GM12878 (cell line): ENCODE measurements at regions of chr1 and their contacts with region 1.

Region 1: GRCh38 chr1:235415008-235415904 is 48.0 kb downstream of the TBCE start:
- DNase-seq: peak; percentile 15
- ATAC-seq: peak; percentile 97
- H3K4me3 ChIP-seq: no peak overlapping the region
- H3K27ac ChIP-seq: no peak overlapping the region
- H3K4me1 ChIP-seq: no peaks in the 10 kb centered on the region
- H3K27me3 ChIP-seq: no peaks in the 10 kb centered on the region
- CTCF ChIP-seq: peak; percentile 78 to 81 (median 80)
- EP300 ChIP-seq: no peak
- POLR2A ChIP-seq: no peak
- RAD21 ChIP-seq: peak; percentile 73

Region 2: DNA sequence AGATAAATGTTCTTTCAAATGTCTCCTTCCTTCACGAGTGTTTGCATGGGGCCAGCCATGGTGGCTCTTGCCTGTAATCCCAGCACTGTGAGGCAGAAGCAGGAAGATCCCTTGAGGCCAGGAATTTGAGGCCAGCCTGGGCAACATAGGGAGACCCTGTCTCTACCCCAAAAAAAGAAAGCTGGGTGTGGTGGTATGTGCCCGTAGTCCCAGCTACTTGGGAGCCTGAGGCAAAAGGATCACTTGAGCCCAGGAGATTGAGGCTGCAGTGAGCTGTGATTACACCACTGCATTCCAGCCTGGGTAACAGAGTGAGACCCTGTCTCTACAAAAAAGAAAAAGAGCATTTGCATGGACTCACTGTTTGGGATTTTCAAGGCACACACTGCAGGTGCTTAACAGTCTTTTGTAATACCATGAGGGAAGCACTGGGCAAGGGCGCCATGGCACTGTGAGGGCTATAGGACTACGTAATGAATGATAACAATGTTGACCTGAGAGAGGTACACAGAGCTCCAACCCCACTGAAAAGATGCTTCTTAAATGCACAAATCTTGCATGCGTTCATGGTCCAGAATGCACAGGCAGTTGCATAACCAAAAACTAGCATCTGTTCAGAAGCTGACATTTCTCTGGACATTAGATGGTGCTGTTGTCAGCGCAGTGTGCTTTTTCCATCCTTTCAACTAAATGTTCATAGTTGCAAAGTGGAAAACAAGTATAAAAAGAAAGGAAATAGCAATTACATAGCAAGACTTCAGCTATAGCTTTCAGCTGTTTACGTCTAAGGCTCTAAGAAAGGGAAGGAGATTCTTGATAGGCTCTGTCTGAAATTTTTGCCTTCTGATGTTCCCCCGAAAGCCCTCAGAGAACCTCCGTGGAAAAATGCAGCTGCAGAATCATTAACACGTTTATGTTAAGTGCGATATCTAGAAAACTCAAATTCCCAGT is 928.5 kb before region 1 on chr1:
- CTCF ChIA-PET with region 1: interaction called, 29 read pairs
- POLR2A ChIA-PET with region 1: no interaction called
- RAD21 ChIA-PET with region 1: interaction called, 4 read pairs
- SMC1A ChIA-PET with region 1: interaction called, 7 read pairs
- in situ Hi-C with region 1: loop called (anchors 5 kb)
- intact Hi-C with region 1: loop called (anchors 5 kb)
- DNase-seq: no peak
- ATAC-seq: peak; percentile 63
- H3K4me3 ChIP-seq: no peak overlapping the region
- H3K27ac ChIP-seq: no peak overlapping the region
- H3K4me1 ChIP-seq: peaks cover 34% of the 10 kb centered on the region
- H3K27me3 ChIP-seq: no peaks in the 10 kb centered on the region
- CTCF ChIP-seq: peak; percentile 59 to 73 (median 72); a peak in 5 of 6 replicates
- EP300 ChIP-seq: no peak
- POLR2A ChIP-seq: no peak
- RAD21 ChIP-seq: peak; percentile 92

Region 3: DNA sequence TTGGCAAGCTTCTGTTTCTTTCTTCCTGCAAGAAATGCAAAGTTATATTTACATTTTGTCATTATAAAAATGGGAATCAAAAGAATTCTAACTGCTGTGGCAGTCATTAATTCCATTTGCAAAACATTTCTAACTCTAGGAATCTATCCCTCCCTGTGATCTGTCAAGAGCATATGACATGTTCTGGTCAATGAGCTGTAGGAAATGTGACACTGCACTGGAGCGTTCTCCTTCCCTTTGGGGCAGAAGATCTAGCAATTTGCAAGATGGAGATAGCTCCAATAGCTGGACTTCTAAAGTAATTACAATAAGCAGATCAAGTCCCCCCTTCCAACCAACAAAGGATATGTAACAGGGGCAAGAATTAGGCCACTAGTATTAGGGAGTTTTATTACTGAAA is 292.9 kb before region 1 on chr1:
- CTCF ChIA-PET with region 1: interaction called, 33 read pairs
- POLR2A ChIA-PET with region 1: no interaction called
- RAD21 ChIA-PET with region 1: interaction called, 10 read pairs
- SMC1A ChIA-PET with region 1: interaction called, 6 read pairs
- in situ Hi-C with region 1: no loop called
- intact Hi-C with region 1: no loop called
- DNase-seq: no peak
- ATAC-seq: peak; percentile 41
- H3K4me3 ChIP-seq: peak overlapping the region; percentile 3; the same call in 1 of the 2 replicates
- H3K27ac ChIP-seq: no peak overlapping the region
- H3K4me1 ChIP-seq: no peaks in the 10 kb centered on the region
- H3K27me3 ChIP-seq: no peaks in the 10 kb centered on the region
- CTCF ChIP-seq: no peak
- EP300 ChIP-seq: no peak
- POLR2A ChIP-seq: no peak
- RAD21 ChIP-seq: no peak

Region 4: DNA sequence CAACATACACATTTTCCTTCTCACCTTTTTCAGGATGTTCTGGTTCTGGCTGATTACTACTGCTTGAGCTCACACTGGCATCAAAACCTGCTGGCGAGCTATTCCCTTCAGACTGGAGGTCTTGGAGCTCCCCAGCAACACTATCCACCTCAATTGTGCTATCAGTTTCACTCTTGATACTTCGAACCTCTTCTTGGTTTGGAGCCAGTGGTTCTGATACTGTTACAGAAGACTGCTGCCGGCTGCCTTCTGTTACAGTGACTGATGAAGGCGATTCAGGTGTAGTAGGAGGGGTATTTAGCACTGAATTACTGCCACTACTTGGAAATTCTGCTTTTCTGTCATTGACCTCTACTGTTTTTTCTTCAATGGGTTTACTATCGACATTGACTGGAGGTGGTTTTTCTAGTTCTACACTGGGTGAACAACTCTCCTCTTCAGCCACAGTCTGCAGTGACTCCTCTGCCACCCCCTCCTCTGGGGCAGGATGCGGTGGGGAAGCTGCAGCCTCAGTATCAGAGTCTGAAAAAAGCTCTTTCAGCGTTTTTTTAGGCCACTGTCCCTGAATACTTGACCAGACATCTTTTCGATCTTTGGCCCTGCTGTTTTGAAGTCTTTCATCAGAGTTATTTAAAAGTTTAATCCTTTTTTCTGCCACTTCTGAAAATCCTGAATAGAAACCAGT is 233.6 kb before region 1 on chr1:
- CTCF ChIA-PET with region 1: interaction called, 10 read pairs
- POLR2A ChIA-PET with region 1: no interaction called
- RAD21 ChIA-PET with region 1: no interaction called
- SMC1A ChIA-PET with region 1: interaction called, 3 read pairs
- in situ Hi-C with region 1: no loop called
- intact Hi-C with region 1: loop called (anchors 5 kb)
- DNase-seq: no peak
- ATAC-seq: no peak; the same call in 2 of the 3 replicates
- H3K4me3 ChIP-seq: no peak overlapping the region
- H3K27ac ChIP-seq: no peak overlapping the region
- H3K4me1 ChIP-seq: no peaks in the 10 kb centered on the region
- H3K27me3 ChIP-seq: no peaks in the 10 kb centered on the region
- CTCF ChIP-seq: no peak
- EP300 ChIP-seq: no peak
- POLR2A ChIP-seq: no peak
- RAD21 ChIP-seq: no peak

Region 5: DNA sequence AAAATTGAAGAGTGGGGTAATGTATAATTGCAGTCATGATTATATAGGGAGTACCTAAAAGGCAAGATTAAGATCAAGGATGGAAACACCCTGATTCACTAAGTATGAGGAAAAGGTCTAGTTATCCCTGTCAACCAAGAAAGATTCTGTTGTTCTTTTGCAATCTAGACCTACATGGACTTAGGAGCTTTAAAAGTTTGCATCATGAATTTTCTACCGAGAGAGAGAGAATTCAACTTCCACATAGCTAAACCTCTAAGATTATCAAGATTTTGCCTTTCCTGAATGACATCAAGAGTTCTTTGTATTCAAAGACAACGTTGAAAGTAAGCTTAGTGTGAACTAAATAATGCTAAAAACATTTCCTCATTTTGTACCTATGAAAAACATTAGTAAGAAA is 175.4 kb before region 1 on chr1:
- CTCF ChIA-PET with region 1: interaction called, 56 read pairs
- POLR2A ChIA-PET with region 1: interaction called, 3 read pairs
- RAD21 ChIA-PET with region 1: interaction called, 11 read pairs
- SMC1A ChIA-PET with region 1: interaction called, 28 read pairs
- in situ Hi-C with region 1: loop called (anchors 5 kb)
- intact Hi-C with region 1: no loop called
- DNase-seq: no peak
- ATAC-seq: no peak
- H3K4me3 ChIP-seq: no peak overlapping the region
- H3K27ac ChIP-seq: no peak overlapping the region
- H3K4me1 ChIP-seq: 0 out of 2 replicates have a peak, but pooled peaks cover 4% of the 10 kb centered on the region
- H3K27me3 ChIP-seq: no peaks in the 10 kb centered on the region
- CTCF ChIP-seq: no peak
- EP300 ChIP-seq: no peak
- POLR2A ChIP-seq: no peak
- RAD21 ChIP-seq: no peak

Region 6: GRCh38 chr1:235328357-235329138 is 86.7 kb before region 1 on chr1 and contains the start of gene GGPS1:
- CTCF ChIA-PET with region 1: interaction called, 22 read pairs
- POLR2A ChIA-PET with region 1: no interaction called
- RAD21 ChIA-PET with region 1: interaction called, 7 read pairs
- SMC1A ChIA-PET with region 1: interaction called, 8 read pairs
- in situ Hi-C with region 1: no loop called
- intact Hi-C with region 1: loop called (anchors 2 kb)
- DNase-seq: peak; percentile 99
- ATAC-seq: peak; percentile 87
- H3K4me3 ChIP-seq: peak within 1 kb of the TSS; percentile 92
- H3K27ac ChIP-seq: peak within 1 kb of the TSS; percentile 93
- H3K4me1 ChIP-seq: peaks cover 8% of the 10 kb centered on the region; the same call in 1 of the 2 replicates
- H3K27me3 ChIP-seq: no peaks in the 10 kb centered on the region
- CTCF ChIP-seq: no peak
- EP300 ChIP-seq: no peak
- POLR2A ChIP-seq: peak; percentile 87
- RAD21 ChIP-seq: no peak
- polyA plus RNA-seq, gene GGPS1: 28.9 to 36.0 TPM

Region 7: GRCh38 chr1:235468970-235469369 is 53.7 kb after region 1 on chr1:
- CTCF ChIA-PET with region 1: no interaction called
- POLR2A ChIA-PET with region 1: no interaction called
- RAD21 ChIA-PET with region 1: no interaction called
- SMC1A ChIA-PET with region 1: no interaction called
- in situ Hi-C with region 1: no loop called
- intact Hi-C with region 1: no loop called
- DNase-seq: no peak
- ATAC-seq: no peak
- H3K4me3 ChIP-seq: no peak overlapping the region
- H3K27ac ChIP-seq: no peak overlapping the region
- H3K4me1 ChIP-seq: no peaks in the 10 kb centered on the region
- H3K27me3 ChIP-seq: no peaks in the 10 kb centered on the region
- CTCF ChIP-seq: no peak
- EP300 ChIP-seq: no peak
- POLR2A ChIP-seq: no peak
- RAD21 ChIP-seq: no peak

Region 8: GRCh38 chr1:235504496-235505222 is 89.4 kb after region 1 on chr1:
- CTCF ChIA-PET with region 1: interaction called, 23 read pairs
- POLR2A ChIA-PET with region 1: no interaction called
- RAD21 ChIA-PET with region 1: interaction called, 8 read pairs
- SMC1A ChIA-PET with region 1: interaction called, 5 read pairs
- in situ Hi-C with region 1: no loop called
- intact Hi-C with region 1: no loop called
- DNase-seq: peak; percentile 96
- ATAC-seq: peak; percentile 86
- H3K4me3 ChIP-seq: peak overlapping the region; percentile 92
- H3K27ac ChIP-seq: peak overlapping the region; percentile 95
- H3K4me1 ChIP-seq: peaks cover 6% of the 10 kb centered on the region
- H3K27me3 ChIP-seq: no peaks in the 10 kb centered on the region
- CTCF ChIP-seq: peak; percentile 82 to 91 (median 86)
- EP300 ChIP-seq: peak in 1 of 2 experiments; percentile 51; a peak in 1 of 4 replicates
- POLR2A ChIP-seq: peak; percentile 86
- RAD21 ChIP-seq: peak; percentile 48; the same call in 1 of the 2 replicates

Region 9: GRCh38 chr1:236103646-236104218 is 688.5 kb after region 1 on chr1:
- CTCF ChIA-PET with region 1: no interaction called
- POLR2A ChIA-PET with region 1: no interaction called
- RAD21 ChIA-PET with region 1: no interaction called
- SMC1A ChIA-PET with region 1: no interaction called
- in situ Hi-C with region 1: no loop called
- intact Hi-C with region 1: no loop called
- DNase-seq: no peak
- ATAC-seq: peak; percentile 85
- H3K4me3 ChIP-seq: no peak overlapping the region
- H3K27ac ChIP-seq: no peak overlapping the region
- H3K4me1 ChIP-seq: no peaks in the 10 kb centered on the region
- H3K27me3 ChIP-seq: no peaks in the 10 kb centered on the region
- CTCF ChIP-seq: peak; percentile 53 to 90 (median 71)
- EP300 ChIP-seq: no peak
- POLR2A ChIP-seq: no peak
- RAD21 ChIP-seq: peak; percentile 91